ENCODE measurements at regions of chr11 and their contacts with region 1.

Region 1: DNA sequence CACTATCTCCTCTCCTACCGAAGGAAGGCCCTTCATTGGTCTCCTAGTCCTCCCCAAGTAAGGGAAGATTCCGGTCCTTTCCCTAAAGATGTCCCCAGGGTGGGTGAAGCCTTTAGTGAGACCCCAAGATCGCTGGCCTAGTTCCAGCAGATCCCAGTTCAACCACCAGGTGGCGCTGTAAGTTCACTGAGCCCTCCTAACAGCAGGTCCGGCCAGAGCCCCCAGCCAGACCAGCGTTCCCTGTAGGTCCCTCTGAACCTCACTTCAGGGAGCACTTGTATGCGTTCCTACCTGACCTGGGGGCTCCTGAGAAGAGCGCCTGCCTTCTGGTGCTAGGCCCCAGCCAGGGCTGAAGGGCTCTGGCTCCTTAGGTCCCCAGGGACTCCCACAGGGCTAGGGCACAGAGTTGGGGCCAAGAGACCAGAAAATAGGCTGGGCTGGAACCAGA is 38.1 kb downstream of the LMO1 start:
- DNase-seq: no peak
- ATAC-seq: peak; percentile 87
- H3K4me3 ChIP-seq: no peak overlapping the region
- H3K27ac ChIP-seq: no peak overlapping the region
- H3K4me1 ChIP-seq: no peaks in the 10 kb centered on the region; the same call in 1 of the 2 replicates
- H3K27me3 ChIP-seq: no peaks in the 10 kb centered on the region
- CTCF ChIP-seq: peak; percentile 88 to 95 (median 90)
- EP300 ChIP-seq: no peak
- POLR2A ChIP-seq: no peak
- RAD21 ChIP-seq: peak; percentile 85

Region 2: GRCh38 chr11:8318336-8318935 is 92.8 kb after region 1 on chr11:
- CTCF ChIA-PET with region 1: no interaction called
- POLR2A ChIA-PET with region 1: no interaction called
- RAD21 ChIA-PET with region 1: no interaction called
- SMC1A ChIA-PET with region 1: no interaction called
- in situ Hi-C with region 1: no loop called
- intact Hi-C with region 1: no loop called
- DNase-seq: no peak
- ATAC-seq: peak; percentile 50; the same call in 2 of the 3 replicates
- H3K4me3 ChIP-seq: no peak overlapping the region
- H3K27ac ChIP-seq: no peak overlapping the region
- H3K4me1 ChIP-seq: no peaks in the 10 kb centered on the region
- H3K27me3 ChIP-seq: no peaks in the 10 kb centered on the region
- CTCF ChIP-seq: peak; percentile 30 to 45 (median 34); a peak in 4 of 6 replicates
- EP300 ChIP-seq: no peak
- POLR2A ChIP-seq: no peak
- RAD21 ChIP-seq: no peak

Region 3: GRCh38 chr11:8604078-8604723 is 378.6 kb after region 1 on chr11:
- CTCF ChIA-PET with region 1: interaction called, 4 read pairs
- POLR2A ChIA-PET with region 1: no interaction called
- RAD21 ChIA-PET with region 1: no interaction called
- SMC1A ChIA-PET with region 1: no interaction called
- in situ Hi-C with region 1: no loop called
- intact Hi-C with region 1: loop called (anchors 10 kb)
- DNase-seq: no peak
- ATAC-seq: peak; percentile 99
- H3K4me3 ChIP-seq: no peak overlapping the region
- H3K27ac ChIP-seq: no peak overlapping the region
- H3K4me1 ChIP-seq: no peaks in the 10 kb centered on the region
- H3K27me3 ChIP-seq: no peaks in the 10 kb centered on the region
- CTCF ChIP-seq: peak; percentile 88 to 96 (median 93)
- EP300 ChIP-seq: no peak
- POLR2A ChIP-seq: no peak
- RAD21 ChIP-seq: peak; percentile 77

Measured in GM12878 (cell line).